Activated CD4-positive, alpha-beta memory T cell treated with anti-CD3 and anti-CD28 coated beads, Interleukin-2, amount 10 ng/mL, durations not matched to agents 7 days and 5 days (primary cell): ENCODE measurements at regions of chr1 and their contacts with region 1.

Region 1: GRCh38 chr1:147084273-147085096 is 87.8 kb downstream of the PRKAB2 start:
- DNase-seq: peak; percentile 86
- H3K4me3 Mint-ChIP-seq: peak overlapping the region; percentile 89
- H3K27ac Mint-ChIP-seq: peak overlapping the region; percentile 98
- H3K4me1 Mint-ChIP-seq: peaks cover 42% of the 10 kb centered on the region
- H3K27me3 Mint-ChIP-seq: peaks cover 57% of the 10 kb centered on the region

Region 2: GRCh38 chr1:147046189-147046862 is 38.2 kb before region 1 on chr1:
- CTCF ChIA-PET with region 1: no interaction called
- POLR2A ChIA-PET with region 1: interaction called, 77 read pairs
- DNase-seq: no peak
- H3K4me3 Mint-ChIP-seq: peak overlapping the region; percentile 55
- H3K27ac Mint-ChIP-seq: peak overlapping the region; percentile 79
- H3K4me1 Mint-ChIP-seq: peaks cover 40% of the 10 kb centered on the region
- H3K27me3 Mint-ChIP-seq: peaks cover 5% of the 10 kb centered on the region

Region 3: DNA sequence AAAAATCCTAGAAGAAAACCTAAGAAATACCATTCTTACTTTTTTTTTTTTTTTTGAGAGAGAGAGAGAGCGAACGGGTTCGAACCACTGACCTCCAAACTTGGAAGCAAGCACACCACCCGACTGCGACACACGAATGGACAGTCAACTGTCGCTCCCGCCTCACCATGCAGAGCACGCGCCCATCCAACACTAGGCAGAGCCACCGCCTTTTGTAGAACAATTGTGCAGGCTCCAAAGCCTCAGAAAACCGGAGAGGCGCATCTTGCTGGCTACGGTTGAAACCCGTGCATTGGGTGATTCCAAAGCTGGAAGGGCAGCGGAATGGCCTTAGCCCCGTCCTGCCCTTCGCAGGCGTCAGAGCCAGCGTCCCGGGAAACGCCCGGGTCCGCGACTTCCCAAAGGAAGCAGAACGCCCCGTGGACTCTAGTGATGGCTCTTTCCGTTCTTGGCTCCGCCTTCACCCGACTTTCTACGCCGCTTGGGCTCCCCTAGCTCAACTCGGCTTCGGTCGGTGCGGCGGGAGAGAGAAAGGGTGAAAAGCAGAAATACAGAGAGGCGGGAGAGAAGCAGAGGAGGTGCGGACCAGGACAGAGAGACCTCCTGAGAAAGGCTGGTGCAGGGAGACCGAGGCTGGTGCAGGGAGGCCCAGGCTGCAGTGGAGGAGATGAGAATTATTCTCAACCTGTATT is 12.0 kb before region 1 on chr1:
- CTCF ChIA-PET with region 1: no interaction called
- POLR2A ChIA-PET with region 1: interaction called, 13 read pairs
- DNase-seq: no peak
- H3K4me3 Mint-ChIP-seq: peak overlapping the region; percentile 66
- H3K27ac Mint-ChIP-seq: no peak overlapping the region
- H3K4me1 Mint-ChIP-seq: peaks cover 26% of the 10 kb centered on the region
- H3K27me3 Mint-ChIP-seq: peaks cover 63% of the 10 kb centered on the region

Region 4: DNA sequence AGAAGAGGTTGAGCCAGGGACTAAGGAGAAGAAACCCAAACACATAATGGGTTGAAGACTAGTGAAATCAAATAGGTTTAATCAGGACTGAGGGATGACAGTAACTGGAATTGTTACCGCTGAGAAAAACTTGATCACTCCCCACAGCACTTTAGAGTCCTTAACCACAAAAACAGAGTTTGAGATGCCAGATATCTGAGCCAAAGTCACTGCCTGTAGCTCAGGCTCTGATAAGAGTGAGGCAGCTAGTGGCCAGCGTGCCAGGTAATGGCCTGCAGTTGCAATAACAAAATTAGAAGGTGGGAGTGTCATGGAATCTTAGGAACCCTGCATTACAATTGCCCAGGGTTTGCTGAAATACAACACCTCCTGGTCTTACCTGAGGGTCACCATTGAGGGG is 39.8 kb after region 1 on chr1:
- CTCF ChIA-PET with region 1: no interaction called
- POLR2A ChIA-PET with region 1: no interaction called
- DNase-seq: no peak
- H3K4me3 Mint-ChIP-seq: no peak overlapping the region
- H3K27ac Mint-ChIP-seq: no peak overlapping the region
- H3K4me1 Mint-ChIP-seq: no peaks in the 10 kb centered on the region
- H3K27me3 Mint-ChIP-seq: peaks cover 19% of the 10 kb centered on the region

Region 5: GRCh38 chr1:147167361-147167760 is 82.9 kb after region 1 on chr1:
- CTCF ChIA-PET with region 1: no interaction called
- POLR2A ChIA-PET with region 1: interaction called, 26 read pairs
- DNase-seq: no peak
- H3K4me3 Mint-ChIP-seq: no peak overlapping the region
- H3K27ac Mint-ChIP-seq: no peak overlapping the region
- H3K4me1 Mint-ChIP-seq: peaks cover 23% of the 10 kb centered on the region
- H3K27me3 Mint-ChIP-seq: no peaks in the 10 kb centered on the region

Region 6: DNA sequence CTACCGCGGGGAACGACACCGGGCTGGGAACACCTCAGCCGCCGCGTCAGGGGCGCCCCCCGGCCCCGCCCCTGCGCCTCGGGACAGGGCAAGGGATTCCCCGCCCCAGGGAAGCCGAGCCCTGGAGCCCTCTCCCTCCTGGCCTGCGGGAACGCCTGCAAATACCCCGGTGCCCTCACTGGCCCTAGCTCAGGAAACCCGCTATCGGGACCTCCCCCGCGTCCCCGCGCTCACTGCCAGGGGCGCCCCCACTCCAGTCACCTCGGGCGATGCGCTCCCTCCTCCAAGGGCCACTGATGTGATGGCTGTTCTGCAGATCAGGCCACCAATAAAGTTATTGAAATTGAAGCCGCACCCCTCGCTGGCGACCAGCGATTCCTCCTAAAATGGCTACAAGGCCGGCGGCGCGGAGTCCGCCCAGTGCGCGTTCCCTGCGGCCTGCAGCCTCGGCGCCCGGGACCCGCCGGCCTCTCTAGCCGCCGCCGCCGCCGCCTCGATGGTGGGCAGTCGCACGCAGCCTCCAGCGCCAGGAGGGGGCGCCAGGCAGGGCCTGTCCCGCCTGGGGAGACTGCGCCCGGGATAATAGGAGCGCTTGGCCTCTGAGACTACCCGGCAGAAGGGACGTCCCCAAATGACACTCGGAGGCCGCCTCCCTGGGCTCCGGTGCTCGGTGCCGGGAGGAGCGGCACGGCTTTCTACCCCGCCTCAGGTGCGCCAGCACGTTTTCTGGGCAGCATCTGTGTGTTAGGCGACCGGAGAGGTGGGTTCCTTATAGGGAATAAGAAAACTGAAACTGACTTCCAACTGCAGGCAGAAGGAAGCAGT is 87.9 kb after region 1 on chr1 and contains the start of gene PRKAB2:
- CTCF ChIA-PET with region 1: no interaction called
- POLR2A ChIA-PET with region 1: interaction called, 33 read pairs
- DNase-seq: peak; percentile 94
- H3K4me3 Mint-ChIP-seq: peak within 1 kb of the TSS; percentile 94
- H3K27ac Mint-ChIP-seq: peak within 1 kb of the TSS; percentile 91
- H3K4me1 Mint-ChIP-seq: peaks cover 36% of the 10 kb centered on the region
- H3K27me3 Mint-ChIP-seq: peaks cover 3% of the 10 kb centered on the region
- total RNA-seq, gene PRKAB2: 13.3 to 15.5 TPM

Region 7: GRCh38 chr1:147242439-147243227 is 158.1 kb after region 1 on chr1 and contains the start of gene CHD1L:
- CTCF ChIA-PET with region 1: interaction called, 4 read pairs
- POLR2A ChIA-PET with region 1: interaction called, 56 read pairs
- DNase-seq: peak; percentile 95
- H3K4me3 Mint-ChIP-seq: peak within 1 kb of the TSS; percentile 95
- H3K27ac Mint-ChIP-seq: peak within 1 kb of the TSS; percentile 83
- H3K4me1 Mint-ChIP-seq: peaks cover 43% of the 10 kb centered on the region
- H3K27me3 Mint-ChIP-seq: peaks cover 3% of the 10 kb centered on the region
- total RNA-seq, gene CHD1L: 70.0 to 70.9 TPM